Transverse colon (tissue), 4 donors: ENCODE measurements at regions of chr13 and their contacts with region 1.

Region 1: GRCh38 chr13:72384879-72385278 is 342.6 kb downstream of the MZT1 start:
- DNase-seq: no peak
- H3K4me3 ChIP-seq: no peak overlapping the region
- H3K27ac ChIP-seq: no peak overlapping the region
- H3K4me1 ChIP-seq: no peaks in the 10 kb centered on the region
- H3K27me3 ChIP-seq: no peaks in the 10 kb centered on the region
- CTCF ChIP-seq: no peak
- EP300 ChIP-seq: no peak
- POLR2A ChIP-seq: no peak

Region 2: GRCh38 chr13:71768881-71769280 is 616.0 kb before region 1 on chr13:
- in situ Hi-C with region 1: no loop called
- intact Hi-C with region 1: loop called (anchors 5 kb)
- DNase-seq: no peak
- H3K4me3 ChIP-seq: no peak overlapping the region
- H3K27ac ChIP-seq: no peak overlapping the region
- H3K4me1 ChIP-seq: peaks cover 0 to 18% (median 0%) of the 10 kb centered on the region in 4 donors
- H3K27me3 ChIP-seq: no peaks in the 10 kb centered on the region
- CTCF ChIP-seq: no peak
- EP300 ChIP-seq: no peak
- POLR2A ChIP-seq: no peak

Region 3: GRCh38 chr13:72469906-72470305 is 85.0 kb after region 1 on chr13:
- in situ Hi-C with region 1: no loop called
- intact Hi-C with region 1: no loop called
- DNase-seq: no peak
- H3K4me3 ChIP-seq: no peak overlapping the region
- H3K27ac ChIP-seq: no peak overlapping the region
- H3K4me1 ChIP-seq: no peaks in the 10 kb centered on the region
- H3K27me3 ChIP-seq: no peaks in the 10 kb centered on the region
- CTCF ChIP-seq: no peak
- EP300 ChIP-seq: no peak
- POLR2A ChIP-seq: no peak

Region 4: GRCh38 chr13:74346960-74347359 is 1962.1 kb after region 1 on chr13:
- in situ Hi-C with region 1: no loop called
- intact Hi-C with region 1: no loop called
- DNase-seq: no peak
- H3K4me3 ChIP-seq: no peak overlapping the region
- H3K27ac ChIP-seq: no peak overlapping the region
- H3K4me1 ChIP-seq: no peaks in the 10 kb centered on the region
- H3K27me3 ChIP-seq: no peaks in the 10 kb centered on the region
- CTCF ChIP-seq: no peak
- EP300 ChIP-seq: no peak
- POLR2A ChIP-seq: no peak